K562 (cell line): ENCODE measurements at regions of chr16 and their contacts with region 1.

Region 1: GRCh38 chr16:66516808-66517585 is 32.9 kb downstream of the TK2 start:
- DNase-seq: peak; percentile 95 to 98 (median 96)
- ATAC-seq: peak; percentile 97
- H3K4me3 ChIP-seq: peak overlapping the region; percentile 30
- H3K27ac ChIP-seq: peak overlapping the region; percentile 94
- H3K4me1 ChIP-seq: peaks cover 29 to 35% of the 10 kb centered on the region in 2 experiments
- H3K27me3 ChIP-seq: no peaks in the 10 kb centered on the region
- CTCF ChIP-seq: 0 out of 6 replicates have a peak, but pooled peaks of 1 of the 3 experiments have one; percentile 15
- EP300 ChIP-seq: peak; percentile 71
- POLR2A ChIP-seq: peak; percentile 86
- RAD21 ChIP-seq: no peak

Region 2: GRCh38 chr16:66462912-66463311 is 54.1 kb before region 1 on chr16:
- CTCF ChIA-PET with region 1: no interaction called
- POLR2A ChIA-PET with region 1: no interaction called
- in situ Hi-C with region 1: no loop called
- intact Hi-C with region 1: no loop called
- DNase-seq: no peak
- ATAC-seq: no peak
- H3K4me3 ChIP-seq: no peak overlapping the region
- H3K27ac ChIP-seq: no peak overlapping the region
- H3K4me1 ChIP-seq: no peaks in the 10 kb centered on the region
- H3K27me3 ChIP-seq: peaks cover 12 to 13% of the 10 kb centered on the region in 2 experiments
- CTCF ChIP-seq: no peak
- EP300 ChIP-seq: no peak
- POLR2A ChIP-seq: no peak
- RAD21 ChIP-seq: no peak

Region 3: GRCh38 chr16:66552286-66553177 is 35.5 kb after region 1 on chr16 and contains the start of gene CKLF:
- CTCF ChIA-PET with region 1: interaction called, 3 read pairs
- POLR2A ChIA-PET with region 1: interaction called, 7 read pairs
- in situ Hi-C with region 1: no loop called
- intact Hi-C with region 1: loop called (anchors 2 kb)
- DNase-seq: peak; percentile 94 to 98 (median 96)
- ATAC-seq: peak; percentile 78
- H3K4me3 ChIP-seq: peak within 1 kb of the TSS; percentile 48
- H3K27ac ChIP-seq: peak within 1 kb of the TSS; percentile 97
- H3K4me1 ChIP-seq: peaks cover 39 to 45% of the 10 kb centered on the region in 2 experiments
- H3K27me3 ChIP-seq: no peaks in the 10 kb centered on the region
- CTCF ChIP-seq: no peak
- EP300 ChIP-seq: no peak; the same call in 1 of the 2 replicates
- POLR2A ChIP-seq: peak; percentile 93
- RAD21 ChIP-seq: no peak
- polyA plus RNA-seq, gene CKLF: 305 to 322 TPM

Region 4: DNA sequence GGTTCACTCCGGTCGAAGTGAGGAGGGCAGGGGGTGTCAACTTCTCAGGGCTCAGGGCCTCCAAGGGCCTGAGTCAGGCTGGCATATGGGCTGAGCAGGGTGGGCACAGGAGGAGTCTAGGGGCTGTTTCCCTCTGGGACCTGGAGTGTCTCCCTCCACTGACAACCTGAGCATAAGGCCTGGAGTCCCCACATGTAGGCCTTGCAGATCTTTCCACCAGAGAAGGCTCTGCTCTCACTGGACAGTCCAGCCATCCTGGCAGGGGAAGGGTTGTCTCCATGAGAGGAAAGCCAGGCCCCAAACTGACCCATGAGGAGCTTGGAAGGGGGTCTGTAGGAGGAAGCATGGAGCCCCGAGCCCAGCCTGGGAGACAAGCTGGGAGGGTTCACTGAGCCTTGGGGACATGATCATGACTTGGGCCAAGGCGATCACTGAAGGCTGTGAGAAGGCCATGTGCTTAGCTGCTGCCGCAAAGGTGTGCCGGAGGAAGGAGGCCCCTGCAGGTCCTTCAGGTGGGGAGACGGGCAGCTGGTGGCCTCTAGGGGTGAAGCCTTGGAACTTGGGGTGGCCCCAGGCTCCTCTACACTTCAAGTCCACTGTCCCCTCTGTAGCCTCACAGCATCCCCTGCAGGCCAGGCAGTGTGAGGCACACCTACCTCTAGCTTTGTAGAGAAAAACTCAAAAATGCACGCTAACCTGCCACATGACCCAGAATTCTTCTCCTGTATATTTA is 72.2 kb after region 1 on chr16:
- CTCF ChIA-PET with region 1: interaction called, 7 read pairs
- POLR2A ChIA-PET with region 1: interaction called, 3 read pairs
- in situ Hi-C with region 1: no loop called
- intact Hi-C with region 1: loop called (anchors 1 kb)
- DNase-seq: peak; percentile 72 to 82 (median 80)
- ATAC-seq: peak; percentile 99
- H3K4me3 ChIP-seq: no peak overlapping the region
- H3K27ac ChIP-seq: no peak overlapping the region
- H3K4me1 ChIP-seq: no peaks in the 10 kb centered on the region; a peak in 1 of 5 replicates
- H3K27me3 ChIP-seq: no peaks in the 10 kb centered on the region
- CTCF ChIP-seq: peak; percentile 97 to 99 (median 98)
- EP300 ChIP-seq: no peak
- POLR2A ChIP-seq: no peak
- RAD21 ChIP-seq: peak; percentile 97 to 98